Heart left ventricle (tissue), 16 donors: ENCODE measurements at regions of chr18 and their contacts with region 1.

Region 1: DNA sequence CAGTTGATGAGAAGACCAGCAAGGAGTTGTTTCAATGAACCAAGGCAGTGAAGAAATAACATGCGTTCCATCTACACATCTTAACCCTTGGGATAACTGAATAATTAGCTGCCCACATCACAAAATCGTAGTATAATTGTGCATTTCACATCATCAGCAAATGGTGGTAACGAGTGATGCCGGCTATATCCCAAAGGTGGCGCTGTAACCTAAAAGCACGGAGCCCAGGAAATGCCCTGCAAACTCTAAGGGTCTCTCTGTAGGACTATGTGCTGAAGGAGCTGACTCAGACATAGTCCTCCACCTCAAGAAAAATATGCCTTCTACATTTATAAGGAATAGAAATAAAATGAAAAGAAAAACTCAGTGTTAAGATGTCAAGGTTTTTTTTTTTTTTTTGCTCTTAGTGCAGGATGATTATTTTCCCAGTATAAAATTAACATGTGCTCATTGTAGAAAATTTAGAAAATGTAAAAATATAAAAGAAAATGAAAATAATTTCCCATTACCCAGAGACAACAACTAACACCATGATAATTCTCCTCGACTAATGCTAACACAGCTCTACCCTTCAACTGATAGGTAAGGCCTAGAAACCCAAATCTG is 23.1 kb upstream of the DSG3 start:
- DNase-seq: no peak
- ATAC-seq: no peak
- H3K4me3 ChIP-seq: no peak overlapping the region
- H3K27ac ChIP-seq: no peak overlapping the region
- H3K4me1 ChIP-seq: no peaks in the 10 kb centered on the region
- H3K27me3 ChIP-seq: no peaks in the 10 kb centered on the region
- CTCF ChIP-seq: peak in 11 of 12 donors; percentile 15 to 60 (median 38)
- POLR2A ChIP-seq: no peak

Region 2: DNA sequence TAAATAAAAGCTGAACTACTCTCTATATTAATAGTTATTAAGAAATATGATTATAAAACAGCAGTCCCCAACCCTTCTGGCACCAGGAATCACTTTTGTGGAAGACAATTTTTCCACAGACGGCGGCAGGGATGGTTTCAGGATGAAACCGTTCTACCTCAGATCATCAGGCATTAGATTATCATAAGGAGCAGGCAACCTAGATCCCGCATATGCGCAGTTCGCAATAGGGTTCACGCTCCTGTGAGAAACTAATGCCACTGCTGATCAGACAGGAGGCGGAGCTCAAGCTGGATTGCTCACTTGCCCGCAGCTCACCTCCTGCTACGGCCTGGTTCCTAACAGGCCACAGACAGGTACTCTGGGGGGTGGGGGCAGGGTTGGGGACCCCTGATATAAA is 54.2 kb after region 1 on chr18:
- intact Hi-C with region 1: loop called in 1 of 10 experiments (anchors 10 kb)
- DNase-seq: no peak
- ATAC-seq: no peak
- H3K4me3 ChIP-seq: no peak overlapping the region
- H3K27ac ChIP-seq: no peak overlapping the region
- H3K4me1 ChIP-seq: no peaks in the 10 kb centered on the region
- H3K27me3 ChIP-seq: no peaks in the 10 kb centered on the region
- CTCF ChIP-seq: no peak
- POLR2A ChIP-seq: no peak

Region 3: GRCh38 chr18:31506024-31506742 is 81.7 kb after region 1 on chr18:
- intact Hi-C with region 1: loop called in 1 of 10 experiments (anchors 10 kb)
- DNase-seq: no peak
- ATAC-seq: no peak
- H3K4me3 ChIP-seq: no peak overlapping the region
- H3K27ac ChIP-seq: no peak overlapping the region
- H3K4me1 ChIP-seq: peaks cover 0 to 6% (median 0%) of the 10 kb centered on the region in 12 donors
- H3K27me3 ChIP-seq: no peaks in the 10 kb centered on the region
- CTCF ChIP-seq: peak; percentile 15 to 65 (median 50)
- POLR2A ChIP-seq: no peak